MCF 10A (cell line): ENCODE measurements at regions of chr5 and their contacts with region 1.

Region 1: GRCh38 chr5:36690041-36690961 is 83.9 kb downstream of the SLC1A3 start:
- DNase-seq: peak; percentile 89
- H3K4me3 Mint-ChIP-seq: peak overlapping the region; percentile 71
- H3K27ac Mint-ChIP-seq: peak overlapping the region; percentile 21
- H3K4me1 Mint-ChIP-seq: peaks cover 14% of the 10 kb centered on the region
- H3K27me3 Mint-ChIP-seq: no peaks in the 10 kb centered on the region
- CTCF ChIP-seq: peak; percentile 62

Region 2: GRCh38 chr5:36444582-36445418 is 245.5 kb before region 1 on chr5:
- CTCF ChIA-PET with region 1: interaction called, 15 read pairs
- POLR2A ChIA-PET with region 1: interaction called, 5 read pairs
- intact Hi-C with region 1: no loop called
- DNase-seq: peak; percentile 73
- H3K4me3 Mint-ChIP-seq: peak overlapping the region; percentile 37
- H3K27ac Mint-ChIP-seq: peak overlapping the region; percentile 84
- H3K4me1 Mint-ChIP-seq: peaks cover 38% of the 10 kb centered on the region
- H3K27me3 Mint-ChIP-seq: no peaks in the 10 kb centered on the region
- CTCF ChIP-seq: no peak

Region 3: DNA sequence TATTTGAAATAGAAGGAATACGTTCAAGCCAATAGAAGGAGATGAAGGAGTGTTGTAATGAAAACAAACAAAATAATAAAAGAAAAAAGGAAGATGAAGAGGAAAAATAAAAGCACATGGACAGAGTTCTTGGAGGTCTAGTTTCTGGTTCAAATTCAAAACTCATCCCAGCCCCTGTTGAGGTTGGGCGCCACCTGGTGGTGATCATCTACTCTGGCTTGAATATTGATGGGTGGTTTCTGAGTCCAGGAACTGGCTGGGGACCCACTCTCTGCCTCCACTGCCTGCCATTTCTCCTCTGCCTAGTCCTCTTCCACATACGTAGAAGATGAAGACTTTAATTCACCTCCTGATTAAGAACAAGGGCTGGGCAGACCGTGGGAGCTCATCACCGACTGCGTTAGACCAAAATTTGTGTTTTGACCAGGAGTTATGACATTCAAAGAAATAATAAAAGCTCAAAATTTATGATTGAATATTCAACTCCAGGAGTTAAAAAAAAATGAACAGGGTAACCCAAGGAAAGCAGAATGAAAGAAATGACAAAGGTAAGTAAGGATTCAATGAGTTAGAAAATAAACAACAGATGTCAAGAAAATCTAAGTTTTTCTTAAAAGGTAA is 182.9 kb before region 1 on chr5:
- CTCF ChIA-PET with region 1: interaction called, 170 read pairs
- POLR2A ChIA-PET with region 1: interaction called, 6 read pairs
- intact Hi-C with region 1: loop called (anchors 1 kb)
- DNase-seq: peak; percentile 87
- H3K4me3 Mint-ChIP-seq: no peak overlapping the region
- H3K27ac Mint-ChIP-seq: no peak overlapping the region
- H3K4me1 Mint-ChIP-seq: peaks cover 13% of the 10 kb centered on the region
- H3K27me3 Mint-ChIP-seq: no peaks in the 10 kb centered on the region
- CTCF ChIP-seq: peak; percentile 88

Region 4: DNA sequence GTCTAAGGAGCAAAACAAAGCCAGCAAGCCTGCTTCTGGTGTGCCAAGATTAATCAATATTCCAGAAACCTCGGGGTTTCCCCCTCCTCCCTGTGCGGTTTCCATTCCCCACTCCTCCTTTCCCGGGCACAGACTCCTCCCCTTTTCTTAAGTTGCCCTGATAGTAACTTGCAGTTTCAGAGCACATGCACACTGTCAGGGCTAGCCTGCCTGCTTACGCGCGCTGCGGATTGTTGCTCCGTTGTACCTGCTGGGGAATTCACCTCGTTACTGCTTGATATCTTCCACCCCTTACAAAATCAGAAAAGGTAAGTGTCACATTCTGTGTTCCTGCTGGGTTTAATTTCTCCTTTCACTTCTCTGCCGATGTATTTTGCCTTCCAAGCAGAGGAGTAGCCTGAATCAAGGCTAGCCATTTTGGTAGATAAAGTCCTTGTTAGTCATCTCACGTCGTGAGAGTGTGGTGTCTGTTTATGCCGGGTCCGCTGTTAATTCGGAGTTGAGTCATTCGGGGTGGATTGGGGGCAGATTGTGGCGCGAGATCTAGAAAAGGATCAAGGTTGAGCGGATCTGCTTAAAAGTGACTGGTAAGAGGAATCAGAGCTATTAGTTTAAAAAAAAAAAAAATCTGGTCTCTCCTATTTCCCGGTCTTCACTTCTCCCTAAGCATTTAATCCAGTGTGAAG is 83.7 kb before region 1 on chr5 and contains the start of gene SLC1A3:
- CTCF ChIA-PET with region 1: interaction called, 11 read pairs
- POLR2A ChIA-PET with region 1: interaction called, 35 read pairs
- intact Hi-C with region 1: loop called (anchors 1 kb)
- DNase-seq: peak; percentile 84
- H3K4me3 Mint-ChIP-seq: peak within 1 kb of the TSS; percentile 88
- H3K27ac Mint-ChIP-seq: peak within 1 kb of the TSS; percentile 84
- H3K4me1 Mint-ChIP-seq: peaks cover 9% of the 10 kb centered on the region
- H3K27me3 Mint-ChIP-seq: no peaks in the 10 kb centered on the region
- CTCF ChIP-seq: no peak
- total RNA-seq, gene SLC1A3: 5.9 and 9.6 TPM in 2 replicates

Region 5: GRCh38 chr5:36657563-36657995 is 32.7 kb before region 1 on chr5:
- CTCF ChIA-PET with region 1: interaction called, 9 read pairs
- POLR2A ChIA-PET with region 1: interaction called, 19 read pairs
- intact Hi-C with region 1: loop called (anchors 1 kb)
- DNase-seq: peak; percentile 100
- H3K4me3 Mint-ChIP-seq: peak overlapping the region; percentile 51
- H3K27ac Mint-ChIP-seq: peak overlapping the region; percentile 95
- H3K4me1 Mint-ChIP-seq: peaks cover 20% of the 10 kb centered on the region
- H3K27me3 Mint-ChIP-seq: no peaks in the 10 kb centered on the region
- CTCF ChIP-seq: no peak

Region 6: GRCh38 chr5:36701085-36701698 is 10.9 kb after region 1 on chr5:
- CTCF ChIA-PET with region 1: interaction called, 33 read pairs
- POLR2A ChIA-PET with region 1: interaction called, 3 read pairs
- intact Hi-C with region 1: no loop called
- DNase-seq: no peak
- H3K4me3 Mint-ChIP-seq: no peak overlapping the region
- H3K27ac Mint-ChIP-seq: no peak overlapping the region
- H3K4me1 Mint-ChIP-seq: peaks cover 6% of the 10 kb centered on the region
- H3K27me3 Mint-ChIP-seq: peaks cover 12% of the 10 kb centered on the region
- CTCF ChIP-seq: no peak